ENCODE measurements at regions of chr15 and their contacts with region 1.

Region 1: DNA sequence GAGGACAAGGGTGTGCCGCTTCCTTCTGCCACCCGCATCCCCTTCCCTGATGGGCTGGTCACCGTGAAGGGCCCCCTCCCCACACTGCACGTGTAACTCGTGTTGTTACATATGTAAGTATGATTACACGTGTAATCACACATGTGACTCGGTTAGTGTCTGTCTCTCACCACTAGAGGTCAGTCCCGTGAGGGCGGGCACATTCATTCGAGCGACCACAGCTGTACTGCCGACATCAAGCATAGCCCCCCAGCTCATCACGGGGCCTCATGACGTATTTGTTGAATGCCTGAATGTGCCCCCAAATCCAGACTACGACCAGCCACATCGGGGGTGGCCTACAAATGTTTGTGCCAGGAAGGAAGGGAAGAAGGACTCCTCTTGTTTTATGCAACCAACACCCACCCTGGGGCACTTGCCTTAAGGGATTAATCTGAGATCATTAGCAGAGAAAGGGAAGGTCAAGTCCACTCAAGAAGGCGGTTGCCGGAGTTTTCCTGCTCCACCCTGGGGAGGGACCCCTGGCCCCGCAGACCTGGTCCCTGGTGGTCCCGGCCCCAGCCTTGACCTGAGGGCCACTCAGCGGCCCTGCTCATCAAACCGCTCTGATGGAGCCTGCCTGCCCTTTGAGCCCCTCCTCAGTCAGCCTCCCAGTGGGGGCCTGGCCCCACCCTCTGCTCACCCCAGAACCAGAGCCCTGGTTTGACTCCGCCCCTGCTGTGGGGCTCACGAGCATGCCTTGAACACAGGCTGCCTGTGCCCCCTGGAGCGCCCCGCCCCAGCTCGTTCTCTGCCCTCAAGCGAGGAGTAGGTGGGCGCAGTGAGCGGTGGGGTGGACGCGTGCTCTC is 52.8 kb downstream of the RGMA start:
- DNase-seq: peak; percentile 74
- ATAC-seq: peak; percentile 92
- H3K4me3 Mint-ChIP-seq: no peak overlapping the region
- H3K27ac Mint-ChIP-seq: no peak overlapping the region
- H3K4me1 Mint-ChIP-seq: peaks cover 4% of the 10 kb centered on the region
- H3K27me3 Mint-ChIP-seq: no peaks in the 10 kb centered on the region
- CTCF ChIP-seq: peak; percentile 67

Region 2: GRCh38 chr15:92954578-92954977 is 81.6 kb before region 1 on chr15:
- CTCF ChIA-PET with region 1: no interaction called
- POLR2A ChIA-PET with region 1: no interaction called
- intact Hi-C with region 1: no loop called
- DNase-seq: peak; percentile 17
- ATAC-seq: no peak
- H3K4me3 Mint-ChIP-seq: no peak overlapping the region
- H3K27ac Mint-ChIP-seq: no peak overlapping the region
- H3K4me1 Mint-ChIP-seq: peaks cover 30% of the 10 kb centered on the region
- H3K27me3 Mint-ChIP-seq: no peaks in the 10 kb centered on the region
- CTCF ChIP-seq: peak; percentile 54

Region 3: DNA sequence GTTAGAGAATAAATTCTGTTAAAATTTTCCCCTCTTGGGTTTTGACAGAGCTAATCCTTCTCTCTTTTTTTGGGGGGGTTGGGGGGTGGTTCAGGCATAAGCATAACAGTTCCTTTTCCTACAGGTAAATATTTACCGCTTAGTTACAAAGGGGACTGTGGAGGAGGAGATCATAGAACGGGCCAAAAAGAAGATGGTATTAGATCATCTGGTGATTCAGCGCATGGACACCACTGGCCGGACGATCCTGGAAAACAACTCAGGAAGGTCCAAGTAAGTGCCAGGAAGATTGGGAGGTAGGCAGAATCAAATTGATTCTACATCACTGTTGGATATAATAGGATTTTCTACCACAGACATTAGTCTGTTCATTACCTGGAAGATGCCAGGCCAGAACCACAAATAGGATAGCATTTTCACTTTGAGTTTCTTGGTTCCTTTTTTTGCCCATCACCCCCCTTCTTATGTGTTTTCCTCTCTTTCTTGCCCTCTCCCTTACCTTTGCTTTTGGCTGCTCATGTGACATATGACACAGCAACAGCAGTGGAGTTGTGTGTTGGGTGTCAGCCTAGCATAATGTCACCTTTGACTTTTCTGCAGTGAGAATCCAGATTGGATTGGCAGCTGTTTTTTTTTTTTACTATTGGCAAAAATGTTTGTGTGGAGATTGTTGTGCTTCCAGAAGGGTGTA is 57.0 kb before region 1 on chr15:
- CTCF ChIA-PET with region 1: no interaction called
- POLR2A ChIA-PET with region 1: no interaction called
- intact Hi-C with region 1: no loop called
- DNase-seq: no peak
- ATAC-seq: no peak
- H3K4me3 Mint-ChIP-seq: no peak overlapping the region
- H3K27ac Mint-ChIP-seq: peak overlapping the region; percentile 12
- H3K4me1 Mint-ChIP-seq: peaks cover 5% of the 10 kb centered on the region
- H3K27me3 Mint-ChIP-seq: no peaks in the 10 kb centered on the region
- CTCF ChIP-seq: no peak

Region 4: GRCh38 chr15:92989470-92989869 is 46.7 kb before region 1 on chr15:
- CTCF ChIA-PET with region 1: no interaction called
- POLR2A ChIA-PET with region 1: no interaction called
- intact Hi-C with region 1: no loop called
- DNase-seq: no peak
- ATAC-seq: no peak
- H3K4me3 Mint-ChIP-seq: no peak overlapping the region
- H3K27ac Mint-ChIP-seq: peak overlapping the region; percentile 32
- H3K4me1 Mint-ChIP-seq: peaks cover 7% of the 10 kb centered on the region
- H3K27me3 Mint-ChIP-seq: no peaks in the 10 kb centered on the region
- CTCF ChIP-seq: no peak

Region 5: GRCh38 chr15:93060336-93061263 is 24.4 kb after region 1 on chr15:
- CTCF ChIA-PET with region 1: interaction called, 11 read pairs
- POLR2A ChIA-PET with region 1: no interaction called
- intact Hi-C with region 1: no loop called
- DNase-seq: no peak
- ATAC-seq: no peak
- H3K4me3 Mint-ChIP-seq: no peak overlapping the region
- H3K27ac Mint-ChIP-seq: no peak overlapping the region
- H3K4me1 Mint-ChIP-seq: peaks cover 2% of the 10 kb centered on the region
- H3K27me3 Mint-ChIP-seq: peaks cover 7% of the 10 kb centered on the region
- CTCF ChIP-seq: no peak

Region 6: GRCh38 chr15:93073465-93073952 is 37.3 kb after region 1 on chr15:
- CTCF ChIA-PET with region 1: no interaction called
- POLR2A ChIA-PET with region 1: no interaction called
- intact Hi-C with region 1: no loop called
- DNase-seq: peak; percentile 14
- ATAC-seq: peak; percentile 47
- H3K4me3 Mint-ChIP-seq: peak overlapping the region; percentile 62
- H3K27ac Mint-ChIP-seq: no peak overlapping the region
- H3K4me1 Mint-ChIP-seq: peaks cover 17% of the 10 kb centered on the region
- H3K27me3 Mint-ChIP-seq: peaks cover 53% of the 10 kb centered on the region
- CTCF ChIP-seq: no peak